ENCODE measurements at regions of chrX and their contacts with region 1.

Region 1: DNA sequence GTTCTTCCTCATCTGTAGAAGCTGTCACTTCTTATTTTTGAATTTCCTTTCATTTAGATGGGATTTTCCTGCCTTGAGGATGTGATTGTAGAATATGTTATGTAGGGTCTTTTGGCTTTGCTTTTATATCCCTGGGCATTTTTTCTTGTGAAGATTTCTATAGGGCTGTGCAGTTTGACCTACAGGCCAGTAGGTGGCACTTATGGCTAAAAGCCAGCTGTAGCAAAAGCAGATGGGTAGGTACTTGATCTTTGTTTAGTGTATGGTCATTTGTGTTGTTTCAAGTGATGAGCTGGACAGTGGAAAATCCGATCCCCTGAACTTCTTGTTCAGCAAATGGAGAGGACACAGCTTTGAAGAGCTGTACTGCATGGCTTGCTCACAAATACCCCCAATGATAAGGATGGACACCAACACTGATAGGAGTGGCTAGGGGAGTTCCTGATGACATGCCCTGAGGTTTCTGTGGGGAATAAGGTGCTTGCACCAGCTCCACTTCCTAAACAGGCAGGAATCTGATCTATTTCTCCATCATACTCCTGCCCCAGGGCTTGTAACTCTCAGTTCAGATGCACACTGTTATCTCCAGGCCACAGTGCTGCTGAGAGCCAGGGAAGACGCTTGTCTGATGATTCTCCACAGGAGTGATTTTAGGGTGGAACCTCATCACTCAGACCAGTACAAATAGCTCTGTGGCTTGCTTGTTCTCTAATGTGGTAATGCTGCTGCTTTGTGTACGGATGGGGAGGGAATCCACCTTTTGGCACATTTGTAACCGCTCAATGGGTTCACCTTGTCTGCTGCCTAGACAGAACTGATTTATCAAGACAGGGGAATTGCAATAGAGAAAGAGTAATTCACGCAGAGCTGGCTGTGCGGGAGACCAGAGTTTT is 417.1 kb upstream of the MAGEB16 start:
- DNase-seq: no peak
- H3K4me3 ChIP-seq: no peak overlapping the region
- H3K27ac ChIP-seq: no peak overlapping the region
- H3K4me1 ChIP-seq: no peaks in the 10 kb centered on the region
- H3K27me3 ChIP-seq: no peaks in the 10 kb centered on the region
- CTCF ChIP-seq: peak in 2 of 3 experiments; percentile 40 to 51; a peak in 3 of 4 replicates
- EP300 ChIP-seq: no peak
- POLR2A ChIP-seq: no peak
- RAD21 ChIP-seq: peak; percentile 71 to 79

Region 2: DNA sequence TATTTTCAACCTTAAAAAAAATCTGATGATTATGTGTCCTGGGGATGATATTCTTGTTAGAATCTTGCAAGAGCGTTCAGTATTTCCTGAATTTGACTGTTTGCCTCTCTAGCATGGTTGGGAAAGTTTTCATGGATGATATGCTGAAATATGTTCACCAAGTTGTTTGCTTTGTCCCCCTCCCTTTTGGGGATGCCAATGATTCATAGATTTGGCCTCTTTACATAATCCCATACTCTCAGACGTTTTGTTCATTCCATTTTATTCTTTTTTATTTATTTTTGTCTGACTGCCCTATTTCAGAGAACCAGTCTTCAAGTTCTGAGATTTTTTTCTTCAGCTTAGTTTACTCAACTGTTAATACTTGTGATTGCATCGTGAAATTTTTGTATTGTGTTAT is 23.4 kb before region 1 on chrX:
- CTCF ChIA-PET with region 1: no interaction called
- POLR2A ChIA-PET with region 1: no interaction called
- DNase-seq: no peak
- H3K4me3 ChIP-seq: no peak overlapping the region
- H3K27ac ChIP-seq: no peak overlapping the region
- H3K4me1 ChIP-seq: no peaks in the 10 kb centered on the region
- H3K27me3 ChIP-seq: no peaks in the 10 kb centered on the region
- CTCF ChIP-seq: no peak
- EP300 ChIP-seq: no peak
- POLR2A ChIP-seq: no peak
- RAD21 ChIP-seq: no peak

Region 3: GRCh38 chrX:35392232-35392631 is 11.2 kb after region 1 on chrX:
- CTCF ChIA-PET with region 1: interaction called, 11 read pairs
- POLR2A ChIA-PET with region 1: no interaction called
- DNase-seq: no peak
- H3K4me3 ChIP-seq: no peak overlapping the region
- H3K27ac ChIP-seq: no peak overlapping the region
- H3K4me1 ChIP-seq: no peaks in the 10 kb centered on the region
- H3K27me3 ChIP-seq: no peaks in the 10 kb centered on the region
- CTCF ChIP-seq: no peak
- EP300 ChIP-seq: no peak
- POLR2A ChIP-seq: no peak
- RAD21 ChIP-seq: no peak

Region 4: DNA sequence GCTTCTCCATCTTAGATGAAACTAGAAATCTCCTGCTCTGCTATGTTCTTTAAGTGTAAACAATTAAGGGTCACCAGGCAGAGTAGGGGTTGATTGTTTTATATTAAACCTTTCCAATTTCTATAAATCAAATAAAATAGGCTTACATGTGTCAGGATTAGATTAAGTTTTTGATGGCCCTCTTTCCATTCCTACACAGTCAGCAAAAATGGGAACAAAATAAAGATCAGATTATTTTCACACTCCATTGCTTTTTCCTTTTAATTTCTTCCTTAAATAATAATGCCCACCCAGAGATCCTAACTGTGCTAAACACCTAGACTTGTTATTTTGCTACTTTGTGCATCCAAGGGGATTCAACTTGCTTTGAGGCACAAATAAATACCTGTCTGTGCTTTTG is 35.7 kb after region 1 on chrX:
- CTCF ChIA-PET with region 1: no interaction called
- POLR2A ChIA-PET with region 1: no interaction called
- DNase-seq: no peak
- H3K4me3 ChIP-seq: no peak overlapping the region
- H3K27ac ChIP-seq: no peak overlapping the region
- H3K4me1 ChIP-seq: no peaks in the 10 kb centered on the region
- H3K27me3 ChIP-seq: no peaks in the 10 kb centered on the region
- CTCF ChIP-seq: no peak
- EP300 ChIP-seq: no peak
- POLR2A ChIP-seq: no peak
- RAD21 ChIP-seq: no peak

Region 5: GRCh38 chrX:35726176-35726575 is 345.1 kb after region 1 on chrX:
- CTCF ChIA-PET with region 1: interaction called, 11 read pairs
- POLR2A ChIA-PET with region 1: no interaction called
- DNase-seq: no peak
- H3K4me3 ChIP-seq: no peak overlapping the region
- H3K27ac ChIP-seq: no peak overlapping the region
- H3K4me1 ChIP-seq: no peaks in the 10 kb centered on the region
- H3K27me3 ChIP-seq: peaks cover 9 to 47% (median 37%) of the 10 kb centered on the region in 4 experiments
- CTCF ChIP-seq: peak in 1 of 3 experiments; percentile 10; a peak in 1 of 4 replicates
- EP300 ChIP-seq: no peak
- POLR2A ChIP-seq: no peak
- RAD21 ChIP-seq: peak; percentile 15 to 21; a peak in 3 of 4 replicates